Heart left ventricle (tissue), 16 donors: ENCODE measurements at regions of chr2 and their contacts with region 1.

Region 1: DNA sequence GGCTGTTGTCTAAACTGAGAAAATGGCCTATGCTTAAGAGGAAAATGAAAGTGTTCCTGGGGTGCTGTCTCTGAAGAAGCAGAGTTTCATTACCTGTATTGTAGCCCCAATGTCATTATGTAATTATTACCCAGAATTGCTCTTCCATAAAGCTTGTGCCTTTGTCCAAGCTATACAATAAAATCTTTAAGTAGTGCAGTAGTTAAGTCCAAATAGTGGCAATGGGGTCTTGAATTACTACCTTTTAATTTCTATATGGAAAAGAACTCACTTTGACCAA is 13.8 kb upstream of the ALLC start:
- DNase-seq: no peak
- ATAC-seq: no peak
- H3K4me3 ChIP-seq: no peak overlapping the region
- H3K27ac ChIP-seq: no peak overlapping the region
- H3K4me1 ChIP-seq: no peaks in the 10 kb centered on the region
- H3K27me3 ChIP-seq: no peaks in the 10 kb centered on the region
- CTCF ChIP-seq: no peak
- POLR2A ChIP-seq: no peak

Region 2: DNA sequence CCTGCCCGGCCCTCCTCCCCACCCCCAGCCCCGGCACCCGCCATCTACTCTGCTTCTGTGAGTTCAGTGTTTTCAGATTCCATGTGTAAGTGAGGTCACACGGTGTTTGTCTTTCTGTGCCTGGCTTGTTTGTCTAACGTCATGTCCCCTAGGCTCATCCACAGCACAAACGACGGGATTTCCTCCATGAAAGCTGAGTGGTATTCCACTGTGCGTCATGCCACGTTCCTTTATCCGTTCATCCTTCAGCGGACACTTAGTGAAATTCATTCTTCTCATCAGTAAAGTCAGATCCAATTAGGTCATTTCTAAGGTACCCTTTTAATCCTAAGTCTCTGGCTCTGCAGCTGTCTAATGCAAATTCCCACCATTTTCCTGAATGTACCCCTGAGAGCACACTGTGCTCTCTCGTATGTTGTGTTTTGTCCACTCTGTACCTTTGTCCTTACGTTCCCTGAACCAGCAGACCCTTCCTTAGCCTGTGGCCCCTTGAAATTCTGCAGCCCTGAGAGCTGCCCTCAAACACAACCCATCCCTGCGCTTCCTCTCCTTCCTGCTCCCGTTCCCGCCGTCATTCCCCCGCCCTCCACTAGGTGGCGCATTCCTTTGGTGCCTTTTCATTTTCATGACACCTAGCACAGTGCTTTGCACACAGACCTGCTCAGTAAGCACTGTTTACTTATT is 220.6 kb before region 1 on chr2:
- intact Hi-C with region 1: loop called in 1 of 10 experiments (anchors 10 kb)
- DNase-seq: peak; percentile 47 to 83 (median 68)
- ATAC-seq: peak in 3 of 4 donors; percentile 51 to 65 (median 57)
- H3K4me3 ChIP-seq: no peak overlapping the region
- H3K27ac ChIP-seq: no peak overlapping the region
- H3K4me1 ChIP-seq: peaks cover 0 to 11% (median 0%) of the 10 kb centered on the region in 12 donors
- H3K27me3 ChIP-seq: no peaks in the 10 kb centered on the region
- CTCF ChIP-seq: peak; percentile 91 to 99 (median 98)
- POLR2A ChIP-seq: no peak

Region 3: GRCh38 chr2:3594493-3595281 is 49.5 kb before region 1 on chr2 and contains the start of gene COLEC11:
- intact Hi-C with region 1: loop called in 3 of 10 experiments (anchors 5 kb)
- DNase-seq: peak; percentile 71 to 82 (median 73)
- ATAC-seq: peak; percentile 76 to 97 (median 94)
- H3K4me3 ChIP-seq: peak within 1 kb of the TSS in 11 of 12 donors; percentile 3 to 48 (median 35)
- H3K27ac ChIP-seq: peak within 1 kb of the TSS in 9 of 12 donors; percentile 2 to 58 (median 44)
- H3K4me1 ChIP-seq: peaks cover 0 to 14% (median 8%) of the 10 kb centered on the region in 12 donors
- H3K27me3 ChIP-seq: peaks cover 0 to 5% (median 0%) of the 10 kb centered on the region in 9 donors
- CTCF ChIP-seq: peak in 11 of 12 donors; percentile 13 to 65 (median 40)
- POLR2A ChIP-seq: no peak
- total RNA-seq, gene COLEC11: 2.3 to 9.9 (median 2.9) TPM

Region 4: GRCh38 chr2:3672861-3673678 is 28.9 kb after region 1 on chr2:
- intact Hi-C with region 1: no loop called
- DNase-seq: no peak
- ATAC-seq: no peak
- H3K4me3 ChIP-seq: no peak overlapping the region
- H3K27ac ChIP-seq: no peak overlapping the region
- H3K4me1 ChIP-seq: no peaks in the 10 kb centered on the region
- H3K27me3 ChIP-seq: peaks cover 0 to 7% (median 0%) of the 10 kb centered on the region in 9 donors
- CTCF ChIP-seq: no peak
- POLR2A ChIP-seq: no peak

Region 5: DNA sequence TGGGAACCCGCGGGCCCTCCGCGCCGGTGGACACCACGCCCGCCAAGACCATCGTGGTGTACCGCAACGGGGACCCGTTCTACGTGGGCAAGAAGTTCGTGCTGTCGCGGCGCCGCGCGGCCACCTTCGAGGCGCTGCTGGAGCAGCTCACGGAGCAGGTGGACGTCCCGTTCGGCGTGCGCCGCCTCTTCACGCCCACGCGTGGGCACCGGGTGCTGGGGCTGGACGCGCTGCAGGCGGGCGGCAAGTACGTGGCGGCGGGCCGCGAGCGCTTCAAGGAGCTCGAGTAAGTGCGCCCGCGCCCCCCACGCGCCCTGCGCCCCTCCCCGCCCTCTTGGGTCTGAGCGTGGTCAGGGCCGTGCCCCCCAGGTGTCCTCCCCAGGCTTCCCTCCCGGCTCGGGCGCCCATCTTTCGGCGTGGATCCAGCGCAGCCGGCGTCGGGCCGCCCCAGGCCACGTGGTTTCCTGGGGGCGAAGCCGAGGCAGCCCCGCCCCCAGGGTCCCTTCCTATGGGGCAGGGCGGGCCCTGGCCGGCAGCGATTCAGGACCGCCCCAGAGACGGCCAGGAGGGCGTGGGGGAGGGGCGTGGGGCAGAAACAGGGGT is 59.7 kb after region 1 on chr2:
- intact Hi-C with region 1: no loop called
- DNase-seq: no peak
- ATAC-seq: peak in 1 of 4 donors; percentile 13
- H3K4me3 ChIP-seq: peak overlapping the region in 5 of 12 donors; percentile 3 to 21 (median 5)
- H3K27ac ChIP-seq: no peak overlapping the region
- H3K4me1 ChIP-seq: peaks cover 0 to 9% (median 0%) of the 10 kb centered on the region in 12 donors
- H3K27me3 ChIP-seq: peaks cover 11 to 51% (median 24%) of the 10 kb centered on the region in 9 donors
- CTCF ChIP-seq: no peak
- POLR2A ChIP-seq: no peak

Region 6: GRCh38 chr2:3823748-3824147 is 179.6 kb after region 1 on chr2:
- intact Hi-C with region 1: no loop called
- DNase-seq: no peak
- ATAC-seq: no peak
- H3K4me3 ChIP-seq: no peak overlapping the region
- H3K27ac ChIP-seq: no peak overlapping the region
- H3K4me1 ChIP-seq: no peaks in the 10 kb centered on the region
- H3K27me3 ChIP-seq: no peaks in the 10 kb centered on the region
- CTCF ChIP-seq: no peak
- POLR2A ChIP-seq: no peak